Adrenal gland (tissue), 19 donors: ENCODE measurements at regions of chr1 and their contacts with region 1.

Region 1: DNA sequence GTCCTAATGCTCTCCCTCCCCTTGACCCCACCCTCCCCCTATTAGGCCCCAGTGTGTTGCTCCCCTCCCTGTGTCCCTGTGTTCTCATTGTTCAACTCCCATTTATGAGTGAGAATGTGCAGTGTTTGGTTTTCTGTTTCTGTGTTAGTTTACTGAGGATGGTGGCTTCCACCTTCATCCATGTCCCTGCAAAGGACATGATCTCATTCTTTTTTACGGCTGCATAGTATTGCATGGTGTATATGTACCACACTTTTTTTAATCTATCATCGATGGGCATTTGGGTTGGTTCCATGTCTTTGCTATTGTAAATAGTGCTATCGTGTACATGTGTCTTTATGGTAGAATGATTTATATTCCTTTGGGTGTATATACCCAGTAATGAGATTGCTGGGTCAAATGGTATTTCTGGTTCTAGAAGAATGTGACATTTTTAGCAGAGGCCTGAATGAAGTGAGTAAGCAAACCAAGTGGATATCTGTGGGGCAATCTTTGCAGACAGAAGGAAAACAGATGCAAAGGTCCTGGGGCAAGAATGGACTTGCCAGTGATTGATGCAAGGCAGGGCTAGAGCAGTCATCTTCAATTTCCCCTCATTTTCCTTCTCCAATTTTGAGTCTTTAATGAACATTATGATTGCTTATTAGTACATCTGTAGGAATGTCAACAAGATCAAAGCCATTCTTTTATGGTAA is 50.2 kb downstream of the UBE4B start:
- DNase-seq: no peak
- H3K4me3 ChIP-seq: no peak overlapping the region
- H3K27ac ChIP-seq: no peak overlapping the region
- H3K4me1 ChIP-seq: peaks cover 17 to 31% of the 10 kb centered on the region in 2 donors
- H3K27me3 ChIP-seq: no peaks in the 10 kb centered on the region
- CTCF ChIP-seq: no peak
- POLR2A ChIP-seq: no peak

Region 2: DNA sequence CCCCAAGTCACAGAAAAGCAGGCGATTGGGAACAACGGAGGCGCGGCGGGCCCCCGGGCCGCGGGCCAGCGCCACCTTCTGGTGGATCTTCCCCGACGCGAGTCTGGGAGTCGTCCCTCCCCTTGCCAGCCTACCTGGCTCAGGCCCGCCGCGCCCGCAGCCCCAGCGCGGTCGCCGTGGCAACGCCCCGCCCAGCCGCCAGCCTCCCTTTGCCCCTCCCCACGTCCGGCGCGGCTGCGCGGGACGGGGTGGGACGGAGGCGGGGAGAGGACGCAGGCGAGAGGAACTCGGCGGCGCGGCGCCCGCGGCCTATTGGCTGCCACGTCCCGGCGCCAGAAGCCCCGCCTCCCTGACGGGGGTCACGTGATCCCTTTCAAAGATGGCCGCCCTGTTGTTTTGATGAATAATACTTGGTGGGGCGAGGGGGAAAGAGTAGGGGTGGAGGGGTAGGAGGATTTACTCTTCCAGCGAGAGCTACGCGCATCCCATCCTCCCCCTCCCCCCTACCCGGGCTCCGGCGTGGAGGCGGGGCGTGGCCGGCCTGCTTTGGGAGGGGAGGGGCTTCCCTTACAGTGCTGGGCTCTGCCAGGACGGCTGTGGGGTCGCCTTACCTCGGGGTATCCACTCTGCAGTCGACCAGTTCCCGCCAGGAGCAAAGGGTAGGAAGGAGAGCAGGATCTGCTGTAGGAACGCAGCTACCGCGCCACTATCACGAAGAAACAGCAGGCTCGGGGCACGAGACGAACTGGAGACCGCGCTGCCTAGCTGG is 50.2 kb before region 1 on chr1 and contains the start of gene UBE4B:
- intact Hi-C with region 1: loop called in 1 of 2 experiments (anchors 5 kb)
- DNase-seq: peak; percentile 97 to 99 (median 98)
- H3K4me3 ChIP-seq: peak within 1 kb of the TSS; percentile 92 to 98 (median 93)
- H3K27ac ChIP-seq: peak within 1 kb of the TSS; percentile 87 to 97 (median 91)
- H3K4me1 ChIP-seq: peaks cover 9 to 29% of the 10 kb centered on the region in 2 donors
- H3K27me3 ChIP-seq: no peaks in the 10 kb centered on the region
- CTCF ChIP-seq: peak; percentile 44 to 94 (median 81)
- POLR2A ChIP-seq: no peak
- total RNA-seq, gene UBE4B: 34.5 to 87.1 (median 61.7) TPM